H1 (cell line): ENCODE measurements at regions of chr1 and their contacts with region 1.

Region 1: DNA sequence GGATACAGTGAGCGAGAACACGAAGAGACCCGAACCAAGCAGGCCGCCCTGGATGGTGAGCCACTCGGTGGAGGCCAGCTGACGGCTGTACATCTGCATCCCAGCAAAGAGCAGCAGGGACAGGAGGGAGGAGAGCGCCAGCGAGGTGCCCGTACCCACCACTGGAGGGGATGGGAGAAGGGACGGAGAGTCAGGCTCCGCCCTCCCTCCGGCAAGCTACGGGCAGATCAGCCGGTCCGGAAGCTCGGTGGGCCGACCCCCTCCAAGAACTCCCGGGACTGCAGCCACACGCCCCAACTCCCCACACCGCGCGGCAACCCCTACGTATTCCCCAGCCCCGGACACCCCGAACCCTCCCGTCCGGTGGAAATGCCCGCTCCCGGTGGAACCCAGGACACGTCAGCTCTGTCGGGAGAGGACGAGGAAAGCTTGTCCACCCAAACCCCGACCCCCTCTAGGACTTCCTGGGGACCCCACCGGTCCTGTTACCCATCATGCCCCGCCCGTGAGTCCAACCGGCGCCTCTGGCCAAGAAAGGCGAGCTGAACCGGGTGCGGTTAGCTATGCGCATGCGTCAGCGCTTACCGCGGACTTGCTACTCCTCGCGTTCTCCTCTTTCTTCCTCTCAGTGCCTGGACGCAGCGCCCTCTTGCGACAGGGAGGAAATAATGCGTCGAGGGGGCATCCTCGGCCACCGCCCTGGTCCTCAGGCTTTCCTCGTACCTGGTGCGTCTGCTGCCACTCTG is at the start of gene KRTCAP2:
- DNase-seq: peak; percentile 94 to 95
- H3K4me3 ChIP-seq: peak within 1 kb of the TSS; percentile 70 to 95 (median 86)
- H3K27ac ChIP-seq: peak within 1 kb of the TSS; percentile 68
- H3K4me1 ChIP-seq: peaks cover 3 to 23% (median 8%) of the 10 kb centered on the region in 4 experiments; a peak in 6 of 7 replicates
- H3K27me3 ChIP-seq: no peaks in the 10 kb centered on the region
- CTCF ChIP-seq: peak in 2 of 3 experiments; percentile 87 to 99; a peak in 3 of 4 replicates
- EP300 ChIP-seq: no peak; a peak in 1 of 3 replicates
- POLR2A ChIP-seq: peak in 1 of 2 experiments; percentile 74; a peak in 2 of 3 replicates
- RAD21 ChIP-seq: peak; percentile 22 to 44; a peak in 3 of 4 replicates
- total RNA-seq, gene KRTCAP2: 146 TPM in 2 replicates

Region 2: DNA sequence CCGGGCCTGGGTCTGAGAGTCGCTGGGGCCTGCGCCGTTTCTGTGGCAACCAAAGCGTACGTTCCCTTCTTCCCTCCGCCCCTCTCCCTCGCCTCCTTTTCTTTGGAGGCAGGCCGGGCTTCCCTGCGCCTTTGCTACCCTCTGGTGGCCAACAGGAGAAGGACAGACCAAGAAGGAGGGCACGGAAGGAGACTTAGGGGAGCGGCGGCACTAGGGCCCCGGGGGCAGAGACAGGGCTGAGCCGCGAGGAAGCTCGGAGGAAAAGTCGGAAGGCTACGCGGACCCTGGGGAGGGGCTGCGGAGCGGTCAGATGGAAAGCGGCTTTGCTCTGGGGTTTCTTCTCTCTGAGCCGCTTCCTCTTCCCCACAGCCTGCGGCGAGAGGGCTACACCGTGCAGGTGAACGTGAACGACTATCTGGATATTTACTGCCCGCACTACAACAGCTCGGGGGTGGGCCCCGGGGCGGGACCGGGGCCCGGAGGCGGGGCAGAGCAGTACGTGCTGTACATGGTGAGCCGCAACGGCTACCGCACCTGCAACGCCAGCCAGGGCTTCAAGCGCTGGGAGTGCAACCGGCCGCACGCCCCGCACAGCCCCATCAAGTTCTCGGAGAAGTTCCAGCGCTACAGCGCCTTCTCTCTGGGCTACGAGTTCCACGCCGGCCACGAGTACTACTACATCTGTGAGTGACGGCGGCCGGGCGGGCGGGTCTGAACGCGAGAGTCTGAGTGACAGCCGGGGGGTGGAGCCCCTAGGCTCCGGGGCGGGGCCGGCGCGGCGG is 88.0 kb before region 1 on chr1:
- CTCF ChIA-PET with region 1: interaction called, 215 read pairs
- POLR2A ChIA-PET with region 1: interaction called, 7 read pairs
- DNase-seq: peak; percentile 89 to 96
- H3K4me3 ChIP-seq: peak overlapping the region; percentile 59 to 81 (median 77)
- H3K27ac ChIP-seq: no peak overlapping the region
- H3K4me1 ChIP-seq: peaks cover 0 to 45% (median 23%) of the 10 kb centered on the region in 4 experiments; a peak in 6 of 7 replicates
- H3K27me3 ChIP-seq: peaks cover 36 to 46% (median 40%) of the 10 kb centered on the region in 4 experiments
- CTCF ChIP-seq: peak in 2 of 3 experiments; percentile 96 to 97; a peak in 3 of 4 replicates
- EP300 ChIP-seq: peak in 1 of 2 experiments; percentile 76; a peak in 1 of 3 replicates
- POLR2A ChIP-seq: 0 out of 3 replicates have a peak, but pooled peaks of 1 of the 2 experiments have one; percentile 18
- RAD21 ChIP-seq: peak; percentile 98 to 99

Region 3: DNA sequence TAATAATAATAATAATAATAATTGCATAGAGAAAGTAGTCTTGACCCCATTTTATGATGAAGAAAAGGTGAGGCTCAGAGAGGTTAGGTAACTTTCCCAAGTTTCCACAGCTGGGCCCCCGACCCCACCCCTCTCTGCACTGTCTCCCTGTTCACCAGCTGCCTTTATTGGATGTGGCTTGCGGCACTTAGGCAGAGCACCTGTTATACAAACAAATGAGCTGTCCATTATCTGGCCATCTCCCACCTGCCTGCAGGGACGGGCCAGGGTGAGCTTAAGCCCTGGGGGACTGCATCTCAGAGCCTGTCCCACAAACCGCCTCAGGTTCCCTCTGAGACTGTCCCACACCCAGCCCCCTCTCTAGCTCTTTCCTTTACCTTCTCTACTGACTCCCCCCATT is 55.3 kb before region 1 on chr1:
- CTCF ChIA-PET with region 1: interaction called, 66 read pairs
- POLR2A ChIA-PET with region 1: interaction called, 3 read pairs
- DNase-seq: no peak
- H3K4me3 ChIP-seq: no peak overlapping the region
- H3K27ac ChIP-seq: no peak overlapping the region
- H3K4me1 ChIP-seq: no peaks in the 10 kb centered on the region
- H3K27me3 ChIP-seq: peaks cover 0 to 3% (median 0%) of the 10 kb centered on the region in 4 experiments; a peak in 1 of 7 replicates
- CTCF ChIP-seq: no peak
- EP300 ChIP-seq: no peak
- POLR2A ChIP-seq: no peak
- RAD21 ChIP-seq: no peak

Region 4: GRCh38 chr1:155135415-155136028 is 37.4 kb before region 1 on chr1 and contains the start of gene SLC50A1:
- CTCF ChIA-PET with region 1: interaction called, 187 read pairs
- POLR2A ChIA-PET with region 1: interaction called, 24 read pairs
- DNase-seq: peak; percentile 76 to 97
- H3K4me3 ChIP-seq: peak within 1 kb of the TSS; percentile 67 to 89 (median 85)
- H3K27ac ChIP-seq: peak within 1 kb of the TSS; percentile 61; the same call in 1 of the 2 replicates
- H3K4me1 ChIP-seq: peaks cover 4 to 26% (median 10%) of the 10 kb centered on the region in 4 experiments; a peak in 5 of 7 replicates
- H3K27me3 ChIP-seq: no peaks in the 10 kb centered on the region
- CTCF ChIP-seq: peak in 1 of 3 experiments; percentile 28; a peak in 2 of 4 replicates
- EP300 ChIP-seq: no peak
- POLR2A ChIP-seq: peak in 1 of 2 experiments; percentile 69; a peak in 2 of 3 replicates
- RAD21 ChIP-seq: no peak; a peak in 1 of 4 replicates
- total RNA-seq, gene SLC50A1: 36.5 and 41.6 TPM in 2 replicates

Region 5: DNA sequence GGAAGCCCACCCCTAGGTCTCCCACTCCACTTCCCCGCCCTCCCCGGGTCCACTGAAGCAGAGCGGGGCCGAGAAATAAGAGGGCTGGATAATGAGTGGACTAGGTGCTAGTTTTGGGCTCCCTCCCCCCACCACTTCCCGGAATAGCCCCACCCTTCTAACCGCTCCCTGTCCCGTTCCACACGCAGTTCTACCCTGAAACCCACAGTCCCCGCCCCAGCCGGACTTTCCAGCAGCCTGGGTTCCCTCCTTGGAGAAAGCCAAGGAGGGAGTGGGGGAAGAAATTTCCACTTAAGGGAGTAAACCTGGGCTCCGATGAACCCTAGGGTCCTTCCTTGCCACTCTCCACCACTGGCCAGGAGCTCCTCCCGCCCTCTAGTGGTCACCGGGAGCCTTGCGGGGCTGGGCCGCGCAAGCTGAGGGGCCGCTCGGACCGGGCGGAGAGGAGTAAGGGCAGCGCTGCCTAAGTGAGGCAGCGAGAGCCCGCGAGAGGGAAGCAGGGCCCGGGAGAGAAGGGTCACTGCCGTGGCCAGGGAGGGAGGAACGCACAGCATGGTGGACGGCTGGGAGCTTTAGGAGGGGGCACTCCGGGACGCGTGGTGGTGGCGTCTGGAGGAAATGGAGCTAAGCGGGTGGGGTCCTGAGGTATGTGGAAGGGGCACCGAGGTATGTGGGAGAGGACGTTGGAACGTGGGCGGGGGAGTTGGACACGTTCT is 20.5 kb after region 1 on chr1:
- CTCF ChIA-PET with region 1: interaction called, 107 read pairs
- POLR2A ChIA-PET with region 1: interaction called, 512 read pairs
- DNase-seq: peak in 1 of 2 experiments; percentile 99
- H3K4me3 ChIP-seq: peak overlapping the region; percentile 60 to 98 (median 96)
- H3K27ac ChIP-seq: peak overlapping the region; percentile 94
- H3K4me1 ChIP-seq: peaks cover 9 to 31% (median 25%) of the 10 kb centered on the region in 4 experiments
- H3K27me3 ChIP-seq: no peaks in the 10 kb centered on the region
- CTCF ChIP-seq: peak in 2 of 3 experiments; percentile 93; a peak in 3 of 4 replicates
- EP300 ChIP-seq: peak in 1 of 2 experiments; percentile 70; a peak in 1 of 3 replicates
- POLR2A ChIP-seq: no peak; a peak in 1 of 3 replicates
- RAD21 ChIP-seq: peak; percentile 49 to 70